ENCODE measurements at regions of chr2 and their contacts with region 1.

Region 1: DNA sequence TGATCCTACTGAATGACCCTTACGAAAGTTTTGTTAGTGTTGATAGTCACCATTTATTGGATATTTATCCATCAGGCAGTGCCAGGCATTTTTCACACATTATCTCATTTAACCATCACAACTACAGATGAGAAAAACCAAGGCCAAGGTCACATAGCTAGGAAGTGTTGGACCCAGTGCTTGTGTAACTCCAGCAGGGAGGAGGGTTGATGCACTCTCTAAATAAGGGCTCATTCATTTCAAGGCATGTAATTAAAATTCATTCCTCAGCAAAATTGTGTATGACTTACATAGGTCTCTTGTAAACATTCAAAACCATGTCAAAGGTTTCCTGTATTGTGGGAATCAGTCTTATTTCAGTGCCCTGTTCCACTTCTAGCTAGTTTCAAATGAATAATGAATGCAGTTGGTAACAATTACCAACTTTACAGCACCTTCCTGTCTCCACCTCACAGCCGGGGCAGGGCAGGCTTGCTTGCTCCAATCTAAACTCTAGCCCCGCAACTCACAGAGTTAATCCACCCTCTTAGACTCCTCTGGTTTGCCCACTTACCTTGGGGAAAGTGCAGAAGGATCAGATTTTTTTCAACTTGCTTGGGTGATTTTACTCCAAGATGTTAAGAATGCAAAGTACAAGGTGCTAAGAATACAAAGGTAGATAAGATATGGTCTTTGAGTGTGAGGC is 5.8 kb upstream of the MAPRE3 start:
- DNase-seq: no peak
- ATAC-seq: no peak
- H3K4me3 ChIP-seq: no peak overlapping the region
- H3K27ac ChIP-seq: no peak overlapping the region
- H3K4me1 ChIP-seq: peaks cover 0 to 10% (median 0%) of the 10 kb centered on the region in 9 donors
- H3K27me3 ChIP-seq: peaks cover 0 to 21% (median 0%) of the 10 kb centered on the region in 7 donors
- CTCF ChIP-seq: no peak

Region 2: DNA sequence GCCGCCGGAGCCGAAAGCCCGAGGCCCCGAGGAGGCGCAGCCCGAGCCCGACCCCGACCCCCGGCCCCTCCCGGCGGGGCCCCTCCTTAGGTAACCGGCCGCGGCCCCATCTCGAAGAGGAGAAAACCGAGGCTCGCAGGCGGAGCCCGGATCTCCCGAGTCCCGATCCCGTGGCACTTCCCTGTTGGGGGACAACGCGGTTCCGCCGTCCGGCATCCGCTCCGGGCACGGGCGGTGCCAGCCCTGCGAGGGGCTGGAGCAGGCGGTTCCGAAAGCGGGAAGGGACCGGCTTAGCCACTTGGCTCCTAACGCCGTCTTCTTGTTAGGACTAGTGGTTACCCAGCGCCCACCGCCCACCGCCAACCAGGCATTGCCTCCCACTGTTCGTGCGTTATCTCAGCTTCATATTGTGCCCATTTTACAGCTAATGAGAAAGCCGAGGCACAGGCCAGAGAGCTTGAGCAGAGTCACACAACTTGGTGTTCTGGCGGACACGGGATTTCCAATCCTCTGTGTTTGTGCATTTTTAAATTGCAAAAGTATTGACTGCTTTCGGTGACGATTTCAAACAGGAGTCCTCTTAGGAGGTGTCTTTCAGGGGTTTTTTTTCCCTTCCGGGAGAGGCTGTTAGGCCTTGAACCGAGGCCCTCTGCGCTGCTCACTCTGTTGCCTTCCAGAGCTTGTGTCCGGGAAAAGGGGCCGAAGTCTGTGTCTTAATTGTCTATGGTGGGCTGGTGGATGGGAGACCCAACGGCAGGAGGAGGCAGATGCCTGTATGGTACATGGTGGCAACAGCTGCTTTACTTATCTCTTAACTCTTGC is 178.2 kb before region 1 on chr2:
- intact Hi-C with region 1: no loop called
- DNase-seq: no peak
- ATAC-seq: peak in 3 of 8 donors; percentile 1 to 34 (median 14)
- H3K4me3 ChIP-seq: peak overlapping the region; percentile 54 to 94 (median 70)
- H3K27ac ChIP-seq: peak overlapping the region in 1 of 10 donors; percentile 77
- H3K4me1 ChIP-seq: peaks cover 0 to 18% (median 12%) of the 10 kb centered on the region in 9 donors
- H3K27me3 ChIP-seq: peaks cover 0 to 6% (median 0%) of the 10 kb centered on the region in 7 donors
- CTCF ChIP-seq: no peak

Region 3: DNA sequence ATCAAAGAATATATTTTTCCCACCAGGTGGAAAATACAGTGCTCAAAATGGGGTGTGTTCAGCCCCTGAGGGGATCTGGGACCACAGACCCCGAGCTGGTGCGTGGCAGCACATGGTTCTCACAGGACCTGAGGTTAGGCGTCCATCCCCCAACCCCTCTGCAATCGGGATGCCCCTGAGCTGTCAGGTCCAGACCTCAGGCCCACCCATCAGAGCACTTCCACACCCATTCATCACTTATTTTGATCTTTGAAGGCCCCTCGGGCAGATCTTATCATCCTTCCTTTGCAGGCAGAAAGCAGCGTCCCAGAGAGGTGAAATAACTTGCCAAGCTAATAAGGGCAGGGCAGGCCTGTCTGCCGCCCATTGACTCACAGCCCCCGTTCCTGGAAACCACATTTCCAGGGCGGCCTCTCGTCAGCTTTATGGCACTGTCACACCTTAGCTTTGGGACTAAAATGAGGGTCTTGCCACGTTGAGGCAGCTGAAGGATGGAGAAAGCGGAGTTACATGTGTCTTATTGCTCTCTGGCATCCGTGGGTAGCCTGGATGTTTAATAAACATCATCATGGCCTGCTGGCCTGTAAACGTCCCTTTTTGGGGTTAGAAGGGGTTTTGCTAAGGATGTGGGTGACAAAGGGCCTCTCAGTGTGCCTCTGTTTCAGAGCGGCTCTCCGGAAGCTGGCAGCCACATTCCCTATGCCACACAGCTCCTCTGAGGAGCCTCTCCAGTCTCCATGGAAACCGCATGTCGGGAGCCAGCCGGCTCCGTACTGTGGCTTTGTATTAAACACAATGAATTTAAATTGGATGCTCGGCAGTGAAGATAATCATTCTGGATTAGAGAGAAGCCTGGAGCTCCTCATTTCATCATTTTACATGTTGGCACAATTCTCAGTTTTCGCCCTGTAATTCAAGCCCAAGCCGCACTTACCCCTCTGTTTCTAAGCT is 52.4 kb before region 1 on chr2:
- intact Hi-C with region 1: no loop called
- DNase-seq: no peak
- ATAC-seq: no peak
- H3K4me3 ChIP-seq: no peak overlapping the region
- H3K27ac ChIP-seq: no peak overlapping the region
- H3K4me1 ChIP-seq: peaks cover 0 to 17% (median 9%) of the 10 kb centered on the region in 9 donors
- H3K27me3 ChIP-seq: peaks cover 0 to 42% (median 11%) of the 10 kb centered on the region in 7 donors
- CTCF ChIP-seq: no peak

Region 4: DNA sequence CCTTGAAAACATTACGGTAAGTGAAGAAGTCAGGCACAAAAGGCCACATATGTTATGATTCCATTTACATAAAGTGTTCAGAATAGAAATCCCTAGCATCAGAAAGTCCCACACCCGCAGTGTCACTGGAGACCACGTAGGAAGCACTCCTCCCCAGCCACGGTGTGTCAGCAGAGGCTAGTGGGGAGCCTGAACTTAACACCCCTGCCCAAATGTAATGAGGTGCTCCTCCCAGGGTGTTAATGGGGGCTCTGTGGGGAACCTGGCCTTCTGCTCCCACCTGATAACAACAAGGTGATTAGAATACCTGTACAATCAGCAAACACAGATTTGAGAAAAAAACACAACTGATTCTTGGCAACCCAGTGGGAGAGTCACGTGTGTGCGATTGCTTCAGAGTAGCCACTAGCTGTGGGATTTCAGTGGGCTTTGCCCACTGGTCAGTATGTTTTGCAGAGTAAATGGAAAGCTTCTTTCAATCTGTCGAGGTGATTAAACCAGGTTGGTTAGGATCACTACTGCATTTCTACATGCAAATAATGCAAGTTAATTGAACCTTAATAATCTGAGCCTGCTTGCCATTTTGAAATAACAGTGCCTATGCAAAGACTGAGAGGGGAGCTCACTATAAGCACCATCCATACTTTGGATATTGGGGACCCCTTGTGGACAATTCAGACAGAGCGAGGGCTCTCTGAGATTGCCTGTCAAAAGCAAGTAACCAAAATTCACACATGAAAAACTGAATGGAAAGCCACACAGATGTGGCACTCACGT is 226.7 kb after region 1 on chr2:
- intact Hi-C with region 1: loop called in 3 of 10 experiments (anchors 5 to 10 kb)
- DNase-seq: peak in 1 of 2 donors; percentile 44
- ATAC-seq: peak; percentile 46 to 82 (median 70)
- H3K4me3 ChIP-seq: no peak overlapping the region
- H3K27ac ChIP-seq: no peak overlapping the region
- H3K4me1 ChIP-seq: peaks cover 0 to 2% (median 0%) of the 10 kb centered on the region in 9 donors
- H3K27me3 ChIP-seq: peaks cover 0 to 4% (median 0%) of the 10 kb centered on the region in 7 donors
- CTCF ChIP-seq: peak; percentile 30 to 71 (median 60)